PC-3 (cell line): ENCODE measurements at regions of chrX and their contacts with region 1.

Region 1: DNA sequence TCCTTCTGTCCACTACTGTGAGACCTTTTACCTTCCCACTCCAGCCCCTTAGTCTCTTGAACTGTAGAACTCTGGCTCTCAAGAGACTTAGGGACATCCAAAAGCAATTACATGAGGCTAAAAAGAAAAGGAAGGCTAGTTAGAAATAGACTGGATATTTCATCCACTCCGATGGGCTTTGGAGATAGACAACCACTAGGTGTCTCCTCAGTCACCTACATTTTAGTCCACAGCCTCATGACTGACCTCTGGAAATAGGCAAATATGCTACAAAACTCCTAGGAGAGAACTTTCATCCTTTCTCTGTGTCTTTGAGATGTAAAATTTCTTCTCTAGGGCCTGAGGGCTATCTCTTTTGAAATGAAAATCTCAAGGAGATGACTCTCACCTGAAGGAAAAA is 45.1 kb upstream of the LAMP2 start:
- DNase-seq: peak; percentile 64
- ATAC-seq: peak; percentile 84
- H3K4me3 ChIP-seq: no peak overlapping the region
- H3K27ac ChIP-seq: no peak overlapping the region
- H3K4me1 ChIP-seq: peaks cover 17% of the 10 kb centered on the region
- H3K27me3 ChIP-seq: no peaks in the 10 kb centered on the region
- CTCF ChIP-seq: peak; percentile 76

Region 2: GRCh38 chrX:120419463-120419862 is 94.8 kb before region 1 on chrX:
- CTCF ChIA-PET with region 1: no interaction called
- POLR2A ChIA-PET with region 1: no interaction called
- intact Hi-C with region 1: no loop called
- DNase-seq: no peak
- ATAC-seq: no peak
- H3K4me3 ChIP-seq: no peak overlapping the region
- H3K27ac ChIP-seq: no peak overlapping the region
- H3K4me1 ChIP-seq: no peaks in the 10 kb centered on the region
- H3K27me3 ChIP-seq: no peaks in the 10 kb centered on the region
- CTCF ChIP-seq: no peak

Region 3: GRCh38 chrX:120769576-120770341 is 255.5 kb after region 1 on chrX:
- CTCF ChIA-PET with region 1: no interaction called
- POLR2A ChIA-PET with region 1: no interaction called
- intact Hi-C with region 1: loop called (anchors 5 kb)
- DNase-seq: peak; percentile 82
- ATAC-seq: peak; percentile 67
- H3K4me3 ChIP-seq: no peak overlapping the region
- H3K27ac ChIP-seq: peak overlapping the region; percentile 86
- H3K4me1 ChIP-seq: peaks cover 28% of the 10 kb centered on the region
- H3K27me3 ChIP-seq: no peaks in the 10 kb centered on the region
- CTCF ChIP-seq: peak; percentile 70